Natural killer cell (primary cell): ENCODE measurements at regions of chr7 and their contacts with region 1.

Region 1: GRCh38 chr7:22110227-22110839 is 164.6 kb upstream of the CDCA7L start:
- DNase-seq: peak; percentile 50 to 88
- ATAC-seq: peak; percentile 80 to 89 (median 82)
- H3K4me3 ChIP-seq: no peak overlapping the region
- H3K4me3 Mint-ChIP-seq: no peak overlapping the region
- H3K27ac ChIP-seq: no peak overlapping the region
- H3K27ac Mint-ChIP-seq: no peak overlapping the region
- H3K4me1 ChIP-seq: no peaks in the 10 kb centered on the region
- H3K4me1 Mint-ChIP-seq: no peaks in the 10 kb centered on the region
- H3K27me3 ChIP-seq: no peaks in the 10 kb centered on the region
- H3K27me3 Mint-ChIP-seq: peaks cover 0 to 9% of the 10 kb centered on the region in 2 donors
- CTCF ChIP-seq: peak; percentile 81

Region 2: GRCh38 chr7:22166928-22167327 is 56.6 kb after region 1 on chr7:
- intact Hi-C with region 1: no loop called
- DNase-seq: no peak
- ATAC-seq: no peak
- H3K4me3 ChIP-seq: no peak overlapping the region
- H3K4me3 Mint-ChIP-seq: no peak overlapping the region
- H3K27ac ChIP-seq: no peak overlapping the region
- H3K27ac Mint-ChIP-seq: no peak overlapping the region
- H3K4me1 ChIP-seq: no peaks in the 10 kb centered on the region
- H3K4me1 Mint-ChIP-seq: no peaks in the 10 kb centered on the region
- H3K27me3 ChIP-seq: no peaks in the 10 kb centered on the region
- H3K27me3 Mint-ChIP-seq: no peaks in the 10 kb centered on the region
- CTCF ChIP-seq: no peak

Region 3: GRCh38 chr7:22488643-22489462 is 378.5 kb after region 1 on chr7:
- intact Hi-C with region 1: loop called (anchors 1 kb)
- DNase-seq: peak; percentile 53 to 82
- ATAC-seq: peak; percentile 66 to 78 (median 70)
- H3K4me3 ChIP-seq: no peak overlapping the region
- H3K4me3 Mint-ChIP-seq: no peak overlapping the region
- H3K27ac ChIP-seq: no peak overlapping the region
- H3K27ac Mint-ChIP-seq: no peak overlapping the region
- H3K4me1 ChIP-seq: no peaks in the 10 kb centered on the region
- H3K4me1 Mint-ChIP-seq: no peaks in the 10 kb centered on the region
- H3K27me3 ChIP-seq: no peaks in the 10 kb centered on the region
- H3K27me3 Mint-ChIP-seq: peaks cover 3 to 12% of the 10 kb centered on the region in 2 donors
- CTCF ChIP-seq: peak; percentile 91

Region 4: DNA sequence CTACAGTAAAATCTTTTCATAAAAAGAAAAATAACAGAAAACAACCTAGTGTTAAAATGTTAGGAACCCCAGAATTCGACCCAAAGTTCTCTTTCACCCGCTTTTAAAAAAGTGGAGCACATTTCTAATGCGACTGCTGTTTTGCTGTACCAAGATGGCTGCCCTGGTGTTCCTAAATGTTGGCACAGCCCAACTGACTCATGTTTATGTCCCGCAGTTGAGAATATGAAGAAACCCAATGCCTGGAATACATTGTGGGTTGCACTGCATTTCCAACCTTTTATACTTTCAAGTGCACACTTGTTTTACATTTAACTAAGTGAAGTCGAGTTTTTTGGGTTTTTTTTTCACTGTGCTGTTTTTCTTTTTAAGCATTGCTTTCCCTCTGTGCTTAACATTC is 388.7 kb after region 1 on chr7:
- intact Hi-C with region 1: loop called (anchors 1 kb)
- DNase-seq: no peak
- ATAC-seq: no peak
- H3K4me3 ChIP-seq: no peak overlapping the region
- H3K4me3 Mint-ChIP-seq: no peak overlapping the region
- H3K27ac ChIP-seq: no peak overlapping the region
- H3K27ac Mint-ChIP-seq: no peak overlapping the region
- H3K4me1 ChIP-seq: peaks cover 8% of the 10 kb centered on the region
- H3K4me1 Mint-ChIP-seq: peaks cover 0 to 7% of the 10 kb centered on the region in 2 donors
- H3K27me3 ChIP-seq: no peaks in the 10 kb centered on the region
- H3K27me3 Mint-ChIP-seq: peaks cover 20 to 37% of the 10 kb centered on the region in 2 donors
- CTCF ChIP-seq: no peak